ENCODE measurements at regions of chr1 and their contacts with region 1.

Region 1: GRCh38 chr1:30085811-30086770 is 637.3 kb downstream of the MATN1 start:
- DNase-seq: peak; percentile 75
- ATAC-seq: peak; percentile 64
- H3K4me3 Mint-ChIP-seq: no peak overlapping the region
- H3K27ac Mint-ChIP-seq: no peak overlapping the region
- H3K4me1 Mint-ChIP-seq: no peaks in the 10 kb centered on the region
- H3K27me3 Mint-ChIP-seq: peaks cover 35% of the 10 kb centered on the region

Region 2: DNA sequence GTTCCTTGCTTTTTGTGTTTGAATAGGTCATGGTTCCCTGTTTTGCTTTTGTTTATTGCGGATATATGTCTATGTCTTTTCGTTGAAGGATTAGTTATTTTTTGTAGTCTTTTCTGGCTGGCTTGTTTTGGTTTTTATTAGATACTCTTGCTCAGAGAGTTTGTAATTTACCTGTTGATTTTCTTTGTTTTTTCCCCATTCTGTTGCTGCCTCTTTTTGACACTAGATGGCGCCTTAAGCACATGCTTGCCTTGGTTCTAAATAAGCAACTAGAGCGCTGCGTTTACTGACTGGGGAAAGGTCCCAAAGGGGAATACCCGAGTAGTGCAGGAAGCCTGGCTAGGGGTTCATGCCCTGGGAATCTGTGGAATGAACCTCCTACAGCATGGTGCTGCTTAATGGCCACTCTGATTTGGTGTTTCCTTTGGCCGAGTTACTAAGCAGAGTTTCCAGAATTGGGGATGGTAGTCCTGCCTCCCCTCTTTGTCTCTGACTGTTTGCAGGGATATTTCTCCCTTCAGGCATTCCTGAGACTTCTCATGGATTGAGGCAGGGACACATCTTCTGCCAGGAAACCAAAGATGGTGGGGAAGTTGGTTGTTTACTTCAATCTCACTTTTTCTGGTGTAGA is 706.5 kb before region 1 on chr1:
- CTCF ChIA-PET with region 1: no interaction called
- POLR2A ChIA-PET with region 1: no interaction called
- intact Hi-C with region 1: loop called in 1 of 2 experiments (anchors 5 kb)
- DNase-seq: peak; percentile 24
- ATAC-seq: no peak
- H3K4me3 Mint-ChIP-seq: no peak overlapping the region
- H3K27ac Mint-ChIP-seq: no peak overlapping the region
- H3K4me1 Mint-ChIP-seq: no peaks in the 10 kb centered on the region
- H3K27me3 Mint-ChIP-seq: peaks cover 37% of the 10 kb centered on the region

Region 3: DNA sequence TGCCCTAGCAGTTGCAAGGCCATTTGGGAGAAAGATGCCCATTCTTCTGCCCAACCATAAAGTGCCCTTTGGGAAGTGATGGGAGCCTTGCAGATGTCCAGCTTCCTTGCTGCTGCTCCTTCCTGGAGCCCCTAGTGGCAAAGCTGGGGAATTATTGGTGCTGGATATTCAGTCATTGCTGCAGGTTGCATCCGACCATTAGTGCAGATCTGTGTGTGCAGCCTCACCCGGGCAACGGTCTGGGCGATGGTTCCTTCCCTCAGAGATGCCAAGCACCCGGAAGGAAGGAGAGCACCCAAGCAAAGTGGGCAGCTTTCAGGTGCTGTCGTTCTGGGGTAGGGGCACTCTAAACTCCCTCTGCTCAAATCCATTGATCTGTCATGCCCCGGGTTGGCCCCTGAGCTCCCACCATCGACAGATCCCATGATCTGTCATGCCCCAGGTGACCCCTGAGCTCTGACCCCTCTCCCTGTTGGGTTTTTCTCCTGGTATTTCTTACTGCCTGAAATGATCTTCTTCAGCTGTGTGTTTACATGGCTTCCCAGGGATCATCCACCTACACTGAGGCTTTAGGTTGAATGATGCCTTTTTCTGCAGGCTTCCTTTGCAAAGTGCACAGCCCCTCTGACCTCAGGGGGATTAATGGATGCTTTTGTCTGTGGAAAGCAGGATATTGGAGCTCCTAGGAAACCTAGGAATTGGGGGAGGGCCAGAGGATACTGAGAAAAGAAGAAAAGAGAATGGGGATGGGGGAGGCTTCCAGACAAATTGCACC is 382.3 kb before region 1 on chr1:
- CTCF ChIA-PET with region 1: no interaction called
- POLR2A ChIA-PET with region 1: no interaction called
- intact Hi-C with region 1: loop called in 1 of 2 experiments (anchors 10 kb)
- DNase-seq: no peak
- ATAC-seq: no peak
- H3K4me3 Mint-ChIP-seq: no peak overlapping the region
- H3K27ac Mint-ChIP-seq: no peak overlapping the region
- H3K4me1 Mint-ChIP-seq: peaks cover 4% of the 10 kb centered on the region
- H3K27me3 Mint-ChIP-seq: peaks cover 40% of the 10 kb centered on the region

Region 4: GRCh38 chr1:29793101-29793546 is 293.0 kb before region 1 on chr1:
- CTCF ChIA-PET with region 1: no interaction called
- POLR2A ChIA-PET with region 1: no interaction called
- intact Hi-C with region 1: loop called (anchors 2 to 10 kb)
- DNase-seq: peak; percentile 88
- ATAC-seq: peak; percentile 39
- H3K4me3 Mint-ChIP-seq: no peak overlapping the region
- H3K27ac Mint-ChIP-seq: no peak overlapping the region
- H3K4me1 Mint-ChIP-seq: no peaks in the 10 kb centered on the region
- H3K27me3 Mint-ChIP-seq: peaks cover 5% of the 10 kb centered on the region

Region 5: DNA sequence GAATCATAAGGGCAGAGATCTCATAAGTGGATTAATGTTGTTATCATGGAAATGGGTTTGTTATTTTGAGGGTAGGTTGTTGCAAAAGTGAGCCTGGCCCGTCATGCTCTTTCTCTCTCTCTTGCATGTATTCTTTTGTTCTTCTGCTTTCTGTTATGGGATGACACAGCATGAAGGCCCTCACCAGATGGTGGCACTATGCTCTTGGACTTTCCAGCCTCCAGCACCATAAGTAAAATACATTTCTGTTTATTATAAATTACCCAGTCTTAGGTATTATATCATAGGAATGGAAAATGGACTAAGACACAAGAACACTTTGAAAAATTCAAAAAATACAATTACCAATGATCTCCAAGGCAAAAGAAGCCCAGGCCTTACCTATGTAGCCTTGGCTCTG is 173.7 kb before region 1 on chr1:
- CTCF ChIA-PET with region 1: no interaction called
- POLR2A ChIA-PET with region 1: no interaction called
- intact Hi-C with region 1: loop called in 1 of 2 experiments (anchors 1 kb)
- DNase-seq: peak; percentile 9
- ATAC-seq: no peak
- H3K4me3 Mint-ChIP-seq: no peak overlapping the region
- H3K27ac Mint-ChIP-seq: no peak overlapping the region
- H3K4me1 Mint-ChIP-seq: no peaks in the 10 kb centered on the region
- H3K27me3 Mint-ChIP-seq: peaks cover 14% of the 10 kb centered on the region

Region 6: DNA sequence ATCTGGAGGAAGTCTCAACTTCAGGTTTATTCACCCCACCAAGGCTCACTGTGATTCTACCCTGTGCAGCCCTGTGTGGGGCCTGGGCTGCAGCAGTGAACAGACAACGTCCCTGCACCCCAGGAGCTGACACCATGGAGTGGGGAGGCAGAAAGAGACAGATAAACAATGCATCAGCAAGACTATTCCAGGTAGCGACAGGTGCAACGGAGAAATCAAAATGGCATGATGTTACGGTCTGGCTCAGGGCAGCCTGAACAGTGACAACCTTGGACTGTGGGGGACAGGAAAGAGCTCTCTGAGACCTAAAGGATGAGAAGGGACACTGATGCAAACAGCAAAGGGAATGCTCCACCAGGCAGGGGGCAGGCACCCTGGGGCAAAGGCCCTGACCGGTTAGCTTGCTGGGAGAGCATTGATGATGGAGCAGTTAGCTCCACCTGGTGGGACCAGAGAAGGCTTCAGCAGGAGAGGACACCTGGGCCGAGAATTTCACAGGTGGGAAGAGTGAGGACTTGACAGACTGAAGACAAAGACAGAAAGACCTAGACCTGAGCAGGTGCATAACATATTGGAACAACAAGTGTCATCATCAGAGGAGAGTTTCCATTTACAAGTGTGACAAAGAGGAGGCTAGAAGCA is 47.4 kb after region 1 on chr1:
- CTCF ChIA-PET with region 1: no interaction called
- POLR2A ChIA-PET with region 1: no interaction called
- intact Hi-C with region 1: no loop called
- DNase-seq: no peak
- ATAC-seq: no peak
- H3K4me3 Mint-ChIP-seq: no peak overlapping the region
- H3K27ac Mint-ChIP-seq: no peak overlapping the region
- H3K4me1 Mint-ChIP-seq: no peaks in the 10 kb centered on the region
- H3K27me3 Mint-ChIP-seq: peaks cover 9% of the 10 kb centered on the region

Measured in activated CD4-positive, alpha-beta T cell treated with anti-CD3 and anti-CD28 coated beads for 36 hours (primary cell).